GM13976 (cell line): ENCODE measurements at regions of chr12 and their contacts with region 1.

Region 1: DNA sequence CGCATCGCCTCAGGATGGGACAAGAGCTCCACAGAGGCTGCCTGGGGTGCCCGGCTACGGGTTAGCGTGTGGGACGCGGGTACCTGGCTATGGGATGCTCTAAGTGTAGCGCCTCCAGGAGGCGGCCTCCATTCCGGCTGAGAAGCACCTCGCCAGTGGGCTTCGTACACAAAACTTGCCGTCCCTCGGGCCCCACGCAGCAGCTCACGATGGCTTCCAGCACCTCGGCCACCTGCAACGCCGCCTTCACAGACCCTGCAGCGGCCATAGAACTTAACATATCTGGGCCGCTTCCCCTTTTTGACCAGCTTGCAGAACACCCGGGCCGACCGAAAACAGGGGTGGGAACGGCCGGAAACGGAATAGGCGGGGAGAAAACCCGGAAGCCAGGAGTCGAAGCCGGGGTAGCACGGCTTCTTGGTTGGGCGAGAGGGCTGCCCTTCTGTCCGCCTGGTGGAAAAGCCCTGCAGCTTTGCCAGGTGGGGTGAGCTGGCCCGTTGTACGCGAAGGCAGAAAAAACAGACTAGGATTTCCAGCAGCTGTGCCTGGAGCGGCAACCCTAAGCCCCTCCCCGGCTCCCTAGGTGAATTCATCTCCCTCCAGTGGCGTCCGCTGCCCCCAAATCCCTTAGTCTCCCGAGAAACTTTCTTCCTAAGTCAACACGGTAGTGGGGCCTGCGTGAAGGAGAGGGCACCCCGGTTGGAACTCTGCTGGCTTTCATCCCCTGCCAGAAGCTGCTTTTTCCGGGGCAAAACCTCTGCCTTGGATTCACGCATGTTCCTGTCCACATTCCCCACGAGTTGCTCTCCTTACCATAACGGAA is at the start of gene BBS10:
- DNase-seq: peak; percentile 90
- CTCF ChIP-seq: peak; percentile 37

Region 2: DNA sequence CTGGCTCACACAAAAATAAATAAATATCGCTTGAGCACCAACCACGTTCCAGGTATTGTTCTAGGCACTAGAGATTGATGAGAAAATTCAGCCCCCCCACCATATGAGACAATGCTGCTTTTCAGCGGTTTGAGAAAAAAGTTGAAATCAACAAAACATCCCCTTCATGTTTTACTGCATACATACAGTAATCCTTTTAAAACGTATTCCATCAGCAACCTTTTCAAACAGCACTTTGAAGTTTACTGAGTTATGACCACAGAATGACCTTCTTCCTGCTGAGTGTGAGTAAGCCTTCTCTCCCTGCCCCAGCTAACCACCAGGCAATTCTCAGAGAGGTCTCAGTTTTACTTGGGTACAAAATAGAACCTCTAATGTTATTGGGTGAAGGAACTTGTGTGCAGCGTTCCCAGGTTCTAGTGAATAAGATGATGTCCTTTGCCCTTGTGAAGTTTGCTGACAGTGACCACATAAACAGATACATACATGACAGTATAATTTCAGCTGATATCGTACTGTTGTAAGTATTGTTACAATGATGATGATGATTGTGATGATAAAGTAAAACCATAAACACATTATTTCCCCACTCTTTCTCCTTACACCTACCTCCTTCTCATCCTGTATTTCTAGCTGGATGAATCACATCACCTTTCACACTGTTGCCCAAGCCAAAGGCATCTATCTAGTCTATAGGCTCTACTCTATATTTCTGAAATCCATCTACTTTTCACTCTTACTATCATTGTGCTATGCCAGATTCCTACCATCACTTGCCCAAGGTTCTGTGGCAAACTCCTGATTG is 712.5 kb before region 1 on chr12:
- in situ Hi-C with region 1: no loop called
- DNase-seq: peak; percentile 25
- CTCF ChIP-seq: no peak

Region 3: GRCh38 chr12:76083904-76084862 is 264.1 kb before region 1 on chr12 and contains the start of gene NAP1L1:
- in situ Hi-C with region 1: loop called (anchors 25 kb)
- DNase-seq: peak; percentile 97
- CTCF ChIP-seq: peak; percentile 4

Region 4: DNA sequence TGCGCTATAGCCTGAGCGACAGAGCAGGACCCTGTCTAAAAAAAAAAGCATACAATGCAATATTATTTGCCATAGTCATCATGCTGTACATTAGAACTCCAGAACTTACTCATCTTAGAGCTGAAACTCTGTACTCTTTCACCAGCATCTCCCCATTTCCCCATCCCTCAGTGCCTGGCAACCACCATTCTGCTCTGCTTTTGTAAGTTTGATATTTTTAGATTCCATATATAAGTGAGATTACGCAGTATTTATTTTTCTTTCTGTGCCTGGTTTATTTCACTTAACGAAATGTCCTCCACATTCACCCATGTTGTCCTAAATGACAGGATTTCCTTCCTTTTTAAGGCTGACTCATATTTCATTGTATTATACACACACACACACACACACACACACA is 121.9 kb before region 1 on chr12:
- in situ Hi-C with region 1: no loop called
- DNase-seq: no peak
- CTCF ChIP-seq: no peak

Region 5: GRCh38 chr12:77247542-77247941 is 899.3 kb after region 1 on chr12:
- in situ Hi-C with region 1: no loop called
- DNase-seq: no peak
- CTCF ChIP-seq: no peak